ENCODE measurements at regions of chr1 and their contacts with region 1.

Region 1: DNA sequence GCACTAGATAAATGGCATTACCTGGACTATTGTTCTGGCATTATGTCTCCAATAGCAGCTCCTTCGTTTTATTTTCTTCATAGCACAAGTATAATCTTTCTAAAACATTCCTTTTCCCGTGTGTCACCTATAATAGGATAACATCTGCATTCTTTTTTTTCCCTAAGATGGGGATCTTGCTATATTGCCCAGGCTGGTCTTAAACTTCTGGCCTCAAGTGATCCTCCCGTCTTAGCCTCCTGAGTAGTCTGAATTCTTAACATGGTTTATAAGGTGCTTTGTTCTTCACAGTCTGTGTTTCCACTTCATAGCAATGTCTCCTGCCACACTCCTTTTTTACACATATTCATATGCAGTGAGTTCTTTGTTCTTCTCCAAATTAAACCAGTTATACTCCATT is 8.6 kb upstream of the MOV10 start:
- DNase-seq: no peak

Region 2: DNA sequence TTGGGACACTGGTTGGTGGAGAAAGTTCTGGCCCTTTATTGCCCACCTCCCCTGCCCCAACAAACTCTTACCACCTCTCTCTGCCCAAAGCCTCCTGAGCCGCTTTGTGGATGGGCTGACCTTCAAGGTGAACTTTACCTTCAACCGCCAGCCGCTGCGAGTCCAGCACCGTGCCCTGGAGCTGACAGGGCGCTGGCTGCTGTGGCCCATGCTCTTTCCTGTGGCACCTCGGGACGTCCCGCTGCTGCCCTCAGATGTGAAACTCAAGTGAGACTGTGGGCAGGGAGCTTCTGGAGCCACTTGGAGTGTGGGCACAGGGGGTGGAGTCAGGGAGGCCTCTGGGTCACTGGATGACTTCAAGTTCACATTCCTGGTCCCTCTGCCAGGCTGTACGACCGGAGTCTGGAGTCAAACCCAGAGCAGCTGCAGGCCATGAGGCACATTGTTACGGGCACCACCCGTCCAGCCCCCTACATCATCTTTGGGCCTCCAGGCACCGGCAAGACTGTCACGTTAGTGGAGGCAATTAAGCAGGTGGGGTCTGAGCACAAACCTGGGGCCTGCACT is 28.6 kb after region 1 on chr1:
- intact Hi-C with region 1: loop called in 1 of 2 experiments (anchors 2 kb)
- DNase-seq: peak; percentile 75

Region 3: GRCh38 chr1:113307771-113308445 is 642.1 kb after region 1 on chr1:
- intact Hi-C with region 1: no loop called
- DNase-seq: no peak